ENCODE measurements at regions of chr17 and their contacts with region 1.

Region 1: GRCh38 chr17:63549946-63550807 is at the start of gene DCAF7:
- DNase-seq: peak; percentile 100
- H3K4me3 Mint-ChIP-seq: peak within 1 kb of the TSS; percentile 87
- H3K27ac Mint-ChIP-seq: peak within 1 kb of the TSS; percentile 93
- H3K4me1 Mint-ChIP-seq: peaks cover 35% of the 10 kb centered on the region
- H3K27me3 Mint-ChIP-seq: no peaks in the 10 kb centered on the region
- total RNA-seq, gene DCAF7: 113 and 115 TPM in 2 replicates

Region 2: DNA sequence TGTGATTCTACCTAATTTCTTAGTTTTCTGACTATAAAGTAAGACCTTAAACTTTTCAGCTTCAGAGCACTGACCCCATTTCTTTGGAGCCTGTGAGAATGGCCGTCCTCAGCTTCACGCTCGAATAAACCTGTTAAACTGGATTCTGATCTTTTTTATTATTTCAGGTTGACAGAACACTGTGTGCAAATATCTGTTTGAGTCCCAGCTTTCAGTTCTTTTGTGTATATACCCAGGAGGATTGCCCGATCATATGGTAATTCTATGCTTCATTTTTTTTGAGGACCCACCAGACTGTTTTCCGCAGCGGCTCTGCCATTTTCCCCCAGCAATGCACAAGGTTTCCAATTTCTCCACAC is 46.9 kb before region 1 on chr17:
- intact Hi-C with region 1: no loop called
- DNase-seq: no peak
- H3K4me3 Mint-ChIP-seq: no peak overlapping the region
- H3K27ac Mint-ChIP-seq: no peak overlapping the region
- H3K4me1 Mint-ChIP-seq: peaks cover 4% of the 10 kb centered on the region
- H3K27me3 Mint-ChIP-seq: peaks cover 34% of the 10 kb centered on the region

Region 3: GRCh38 chr17:63523253-63523855 is 26.8 kb before region 1 on chr17 and contains the start of gene KCNH6:
- intact Hi-C with region 1: loop called (anchors 1 kb)
- DNase-seq: no peak
- H3K4me3 Mint-ChIP-seq: peak within 1 kb of the TSS; percentile 14
- H3K27ac Mint-ChIP-seq: no peak within 1 kb of the TSS
- H3K4me1 Mint-ChIP-seq: peaks cover 5% of the 10 kb centered on the region
- H3K27me3 Mint-ChIP-seq: peaks cover 29% of the 10 kb centered on the region
- total RNA-seq, gene KCNH6: not detected in 2 replicates

Region 4: DNA sequence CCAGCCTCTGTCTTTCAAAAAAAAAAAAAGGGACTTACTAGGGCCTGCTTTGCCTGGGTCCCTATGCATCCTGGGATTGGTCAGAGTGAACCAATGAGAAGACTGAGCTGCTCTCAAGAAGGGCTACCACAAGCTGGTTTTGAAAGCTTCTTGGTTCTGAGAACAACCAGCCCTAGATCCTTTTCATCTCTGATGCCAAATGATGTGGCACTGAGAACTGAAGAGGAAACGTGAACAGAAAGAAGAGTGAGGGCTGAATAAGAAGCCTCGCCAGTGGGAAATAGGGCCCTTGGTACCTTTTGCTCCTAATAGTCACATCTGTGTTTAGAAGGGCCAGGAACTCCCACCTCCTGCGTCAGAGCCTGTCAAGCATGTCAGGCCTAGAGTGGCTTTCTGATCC is 61.2 kb after region 1 on chr17:
- intact Hi-C with region 1: loop called (anchors 2 kb)
- DNase-seq: peak; percentile 72
- H3K4me3 Mint-ChIP-seq: peak overlapping the region; percentile 68
- H3K27ac Mint-ChIP-seq: peak overlapping the region; percentile 87
- H3K4me1 Mint-ChIP-seq: peaks cover 26% of the 10 kb centered on the region
- H3K27me3 Mint-ChIP-seq: no peaks in the 10 kb centered on the region

Region 5: DNA sequence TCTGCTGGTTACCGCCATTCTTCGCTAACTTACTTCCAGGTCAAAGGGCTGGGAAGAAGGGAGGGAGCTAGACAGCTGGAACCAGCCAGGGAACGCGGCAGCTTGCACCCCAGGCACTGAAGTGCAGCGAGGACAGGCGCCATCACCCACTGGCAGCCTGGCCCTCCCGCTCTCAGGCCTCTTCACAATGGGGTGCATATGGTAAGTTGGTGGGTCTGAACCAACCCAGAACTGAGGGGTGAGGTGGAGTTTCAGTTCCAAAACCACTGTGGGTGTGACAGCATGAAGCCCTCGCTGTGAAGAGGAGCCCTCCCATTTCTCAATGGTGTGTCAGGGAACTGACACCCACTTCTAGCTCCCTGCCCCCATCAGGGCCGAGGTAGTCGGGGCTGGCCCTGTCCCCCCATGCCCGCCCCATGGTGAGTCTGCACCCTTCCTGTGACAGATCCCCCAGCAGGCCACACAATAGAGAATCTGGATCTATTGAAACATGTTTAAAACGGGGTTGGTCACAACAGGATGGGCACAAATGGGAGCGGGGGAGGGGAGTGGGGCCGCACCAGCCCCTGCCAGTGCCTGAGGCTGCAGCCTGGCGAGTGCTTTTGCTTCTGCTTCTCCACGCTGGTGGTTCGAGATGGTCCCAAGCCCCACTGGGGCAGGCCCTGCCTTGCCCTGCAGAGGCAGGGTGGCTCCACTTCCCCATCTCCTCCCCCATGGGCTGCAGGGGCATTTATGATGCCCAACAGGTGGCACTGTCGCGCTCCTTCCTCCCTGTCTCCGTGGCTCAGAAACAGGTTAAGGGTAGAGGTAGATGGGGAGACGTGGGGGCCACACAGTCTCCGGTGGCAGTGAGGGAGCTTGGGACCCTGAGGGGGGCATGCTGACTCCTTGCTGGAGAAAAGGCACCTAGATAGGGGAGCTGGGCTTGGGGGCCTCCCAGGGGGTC is 147.4 kb after region 1 on chr17:
- intact Hi-C with region 1: loop called (anchors 2 kb)
- DNase-seq: peak; percentile 94
- H3K4me3 Mint-ChIP-seq: peak overlapping the region; percentile 93
- H3K27ac Mint-ChIP-seq: peak overlapping the region; percentile 93
- H3K4me1 Mint-ChIP-seq: peaks cover 43% of the 10 kb centered on the region
- H3K27me3 Mint-ChIP-seq: no peaks in the 10 kb centered on the region

Region 6: GRCh38 chr17:63842540-63843386 is 292.6 kb after region 1 on chr17 and contains the start of gene SMARCD2:
- intact Hi-C with region 1: loop called (anchors 5 kb)
- DNase-seq: peak; percentile 99
- H3K4me3 Mint-ChIP-seq: peak within 1 kb of the TSS; percentile 98
- H3K27ac Mint-ChIP-seq: peak within 1 kb of the TSS; percentile 93
- H3K4me1 Mint-ChIP-seq: peaks cover 27% of the 10 kb centered on the region
- H3K27me3 Mint-ChIP-seq: no peaks in the 10 kb centered on the region
- total RNA-seq, gene SMARCD2: 120 and 121 TPM in 2 replicates